B cell (primary cell): ENCODE measurements at regions of chr11 and their contacts with region 1.

Region 1: GRCh38 chr11:73335204-73335923 is 27.3 kb downstream of the ARHGEF17 start:
- DNase-seq: peak; percentile 81
- ATAC-seq: peak; percentile 81
- H3K4me3 ChIP-seq: no peak overlapping the region
- H3K4me3 Mint-ChIP-seq: no peak overlapping the region
- H3K27ac ChIP-seq: no peak overlapping the region
- H3K27ac Mint-ChIP-seq: no peak overlapping the region
- H3K4me1 ChIP-seq: no peaks in the 10 kb centered on the region
- H3K4me1 Mint-ChIP-seq: no peaks in the 10 kb centered on the region
- H3K27me3 ChIP-seq: peaks cover 0 to 8% (median 2%) of the 10 kb centered on the region in 4 experiments
- H3K27me3 Mint-ChIP-seq: no peaks in the 10 kb centered on the region
- CTCF ChIP-seq: peak; percentile 99

Region 2: DNA sequence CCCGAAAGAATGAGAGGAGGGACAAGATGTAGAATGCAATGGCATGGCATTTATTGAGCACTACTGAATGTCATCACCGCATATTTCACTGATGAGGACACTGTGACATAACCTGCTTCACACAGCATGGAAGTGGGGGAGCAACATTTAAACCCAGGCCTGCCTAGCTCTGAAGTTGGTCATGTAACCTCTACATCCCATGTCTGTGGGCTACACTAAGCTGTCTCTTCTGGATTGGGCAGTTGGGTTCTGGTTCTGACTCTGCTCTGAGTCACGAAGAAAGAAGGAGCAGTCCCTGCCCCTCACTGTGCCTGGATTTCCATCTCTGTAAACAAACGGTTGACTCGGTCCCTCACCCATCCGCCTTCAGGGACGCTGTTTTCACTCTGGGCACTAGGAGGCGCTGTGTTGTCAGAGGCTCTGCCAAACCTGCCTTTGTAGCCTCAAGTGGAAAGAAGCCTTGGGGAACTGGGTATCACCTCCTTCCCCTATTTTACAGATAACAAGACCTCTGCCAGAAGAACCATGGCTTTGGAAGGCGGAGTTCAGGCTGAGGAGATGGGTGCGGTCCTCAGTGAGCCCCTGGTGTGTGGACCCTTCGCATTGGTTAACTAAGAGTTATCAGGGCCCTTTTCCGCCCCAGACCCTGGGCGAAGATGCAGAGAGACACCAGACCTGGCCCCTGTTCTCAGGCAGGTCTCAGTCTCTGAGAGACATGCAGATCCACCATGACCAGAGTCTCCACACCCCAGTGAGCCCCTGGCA is 40.0 kb before region 1 on chr11:
- CTCF ChIA-PET with region 1: interaction called, 104 read pairs
- POLR2A ChIA-PET with region 1: interaction called, 7 read pairs
- intact Hi-C with region 1: loop called (anchors 1 kb)
- DNase-seq: peak; percentile 82
- ATAC-seq: peak; percentile 86
- H3K4me3 ChIP-seq: no peak overlapping the region
- H3K4me3 Mint-ChIP-seq: no peak overlapping the region
- H3K27ac ChIP-seq: no peak overlapping the region
- H3K27ac Mint-ChIP-seq: no peak overlapping the region
- H3K4me1 ChIP-seq: peaks cover 4 to 8% of the 10 kb centered on the region in 2 donors
- H3K4me1 Mint-ChIP-seq: peaks cover 8% of the 10 kb centered on the region
- H3K27me3 ChIP-seq: peaks cover 0 to 42% (median 0%) of the 10 kb centered on the region in 4 experiments
- H3K27me3 Mint-ChIP-seq: peaks cover 19% of the 10 kb centered on the region
- CTCF ChIP-seq: peak; percentile 90

Region 3: GRCh38 chr11:73307323-73308002 is 27.9 kb before region 1 on chr11:
- CTCF ChIA-PET with region 1: interaction called, 157 read pairs
- POLR2A ChIA-PET with region 1: interaction called, 3 read pairs
- intact Hi-C with region 1: no loop called
- DNase-seq: peak; percentile 91
- ATAC-seq: peak; percentile 76
- H3K4me3 ChIP-seq: peak overlapping the region; percentile 51 to 84 (median 65)
- H3K4me3 Mint-ChIP-seq: peak overlapping the region; percentile 89
- H3K27ac ChIP-seq: no peak overlapping the region
- H3K27ac Mint-ChIP-seq: peak overlapping the region; percentile 51
- H3K4me1 ChIP-seq: peaks cover 20 to 25% of the 10 kb centered on the region in 2 donors
- H3K4me1 Mint-ChIP-seq: peaks cover 13% of the 10 kb centered on the region
- H3K27me3 ChIP-seq: peaks cover 0 to 52% (median 18%) of the 10 kb centered on the region in 4 experiments
- H3K27me3 Mint-ChIP-seq: peaks cover 24% of the 10 kb centered on the region
- CTCF ChIP-seq: peak; percentile 72

Region 4: GRCh38 chr11:73314117-73314961 is 21.0 kb before region 1 on chr11:
- CTCF ChIA-PET with region 1: interaction called, 157 read pairs
- POLR2A ChIA-PET with region 1: no interaction called
- intact Hi-C with region 1: no loop called
- DNase-seq: no peak
- ATAC-seq: no peak
- H3K4me3 ChIP-seq: no peak overlapping the region
- H3K4me3 Mint-ChIP-seq: no peak overlapping the region
- H3K27ac ChIP-seq: no peak overlapping the region
- H3K27ac Mint-ChIP-seq: no peak overlapping the region
- H3K4me1 ChIP-seq: peaks cover 0 to under 1% of the 10 kb centered on the region in 2 donors
- H3K4me1 Mint-ChIP-seq: no peaks in the 10 kb centered on the region
- H3K27me3 ChIP-seq: peaks cover 0 to 5% (median 3%) of the 10 kb centered on the region in 4 experiments
- H3K27me3 Mint-ChIP-seq: peaks cover 10% of the 10 kb centered on the region
- CTCF ChIP-seq: no peak

Region 5: DNA sequence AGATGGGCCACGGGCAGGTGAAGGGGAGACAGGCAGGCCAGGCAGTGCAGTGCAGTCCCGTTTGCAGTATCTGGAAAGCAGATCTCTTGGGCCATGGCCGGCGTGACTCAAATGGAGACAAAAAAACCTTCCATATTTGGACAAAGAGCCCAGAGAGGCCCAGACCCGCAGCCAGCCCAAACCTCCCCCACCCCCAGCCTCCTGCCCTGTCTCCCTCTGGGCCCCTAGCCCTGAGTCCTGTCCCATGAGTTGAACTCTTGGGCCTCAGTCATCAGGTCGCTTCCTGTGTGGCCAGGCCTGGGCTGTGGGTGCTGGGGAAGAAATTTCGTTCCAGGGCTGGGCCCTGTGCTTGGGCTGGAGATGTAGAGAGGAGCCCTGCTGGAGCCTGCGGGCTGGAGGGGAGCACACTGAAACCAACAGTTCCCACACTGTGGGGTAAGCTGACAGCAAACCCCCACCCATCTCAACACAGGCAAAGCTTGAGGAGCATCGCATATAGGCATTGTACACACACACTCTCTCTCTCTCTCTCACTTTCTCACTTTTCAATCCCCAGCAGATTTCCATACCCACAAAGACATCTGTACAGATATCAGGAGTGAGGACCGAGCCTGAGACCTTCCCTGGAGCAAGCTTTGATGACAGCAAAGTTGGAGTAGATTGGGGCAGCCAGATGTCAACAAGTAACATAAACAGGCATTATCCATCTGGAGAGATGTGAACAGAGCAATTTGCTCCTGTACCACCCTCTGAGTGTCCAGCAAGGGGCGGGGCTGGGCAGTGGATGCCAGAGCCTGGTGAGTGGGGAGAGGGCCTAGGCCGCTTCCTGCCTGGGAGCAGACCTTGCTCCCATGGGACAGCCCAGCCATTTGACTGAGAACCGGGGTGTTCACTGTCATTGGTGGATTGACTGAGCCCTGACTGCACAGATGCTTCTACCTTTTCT is 10.1 kb before region 1 on chr11:
- CTCF ChIA-PET with region 1: interaction called, 45 read pairs
- POLR2A ChIA-PET with region 1: no interaction called
- intact Hi-C with region 1: no loop called
- DNase-seq: no peak
- ATAC-seq: no peak
- H3K4me3 ChIP-seq: no peak overlapping the region
- H3K4me3 Mint-ChIP-seq: no peak overlapping the region
- H3K27ac ChIP-seq: no peak overlapping the region
- H3K27ac Mint-ChIP-seq: no peak overlapping the region
- H3K4me1 ChIP-seq: peaks cover 17 to 25% of the 10 kb centered on the region in 2 donors
- H3K4me1 Mint-ChIP-seq: peaks cover 23% of the 10 kb centered on the region
- H3K27me3 ChIP-seq: peaks cover 0 to 3% (median 0%) of the 10 kb centered on the region in 4 experiments
- H3K27me3 Mint-ChIP-seq: no peaks in the 10 kb centered on the region
- CTCF ChIP-seq: no peak

Region 6: GRCh38 chr11:73365352-73366264 is 30.2 kb after region 1 on chr11:
- CTCF ChIA-PET with region 1: interaction called, 10 read pairs
- POLR2A ChIA-PET with region 1: no interaction called
- intact Hi-C with region 1: no loop called
- DNase-seq: no peak
- ATAC-seq: no peak
- H3K4me3 ChIP-seq: no peak overlapping the region
- H3K4me3 Mint-ChIP-seq: peak overlapping the region; percentile 64
- H3K27ac ChIP-seq: peak overlapping the region; percentile 77 to 82
- H3K27ac Mint-ChIP-seq: peak overlapping the region; percentile 83
- H3K4me1 ChIP-seq: peaks cover 43 to 50% of the 10 kb centered on the region in 2 donors
- H3K4me1 Mint-ChIP-seq: peaks cover 55% of the 10 kb centered on the region
- H3K27me3 ChIP-seq: no peaks in the 10 kb centered on the region
- H3K27me3 Mint-ChIP-seq: no peaks in the 10 kb centered on the region
- CTCF ChIP-seq: no peak

Region 7: GRCh38 chr11:73445980-73446379 is 110.6 kb after region 1 on chr11:
- CTCF ChIA-PET with region 1: no interaction called
- POLR2A ChIA-PET with region 1: no interaction called
- intact Hi-C with region 1: no loop called
- DNase-seq: no peak
- ATAC-seq: no peak
- H3K4me3 ChIP-seq: no peak overlapping the region
- H3K4me3 Mint-ChIP-seq: no peak overlapping the region
- H3K27ac ChIP-seq: no peak overlapping the region
- H3K27ac Mint-ChIP-seq: no peak overlapping the region
- H3K4me1 ChIP-seq: no peaks in the 10 kb centered on the region
- H3K4me1 Mint-ChIP-seq: no peaks in the 10 kb centered on the region
- H3K27me3 ChIP-seq: no peaks in the 10 kb centered on the region
- H3K27me3 Mint-ChIP-seq: no peaks in the 10 kb centered on the region
- CTCF ChIP-seq: no peak